ENCODE measurements at regions of chr4 and their contacts with region 1.

Region 1: GRCh38 chr4:77385124-77385969 is 220.3 kb upstream of the CXCL13 start:
- DNase-seq: peak; percentile 32
- H3K4me3 Mint-ChIP-seq: no peak overlapping the region
- H3K27ac Mint-ChIP-seq: no peak overlapping the region
- H3K4me1 Mint-ChIP-seq: peaks cover 6% of the 10 kb centered on the region
- H3K27me3 Mint-ChIP-seq: peaks cover 8% of the 10 kb centered on the region

Region 2: GRCh38 chr4:77372375-77372774 is 13.0 kb before region 1 on chr4:
- intact Hi-C with region 1: no loop called
- DNase-seq: no peak
- H3K4me3 Mint-ChIP-seq: no peak overlapping the region
- H3K27ac Mint-ChIP-seq: no peak overlapping the region
- H3K4me1 Mint-ChIP-seq: peaks cover 10% of the 10 kb centered on the region
- H3K27me3 Mint-ChIP-seq: peaks cover 7% of the 10 kb centered on the region

Region 3: GRCh38 chr4:77433418-77433733 is 48.0 kb after region 1 on chr4:
- intact Hi-C with region 1: loop called (anchors 1 kb)
- DNase-seq: peak; percentile 4
- H3K4me3 Mint-ChIP-seq: no peak overlapping the region
- H3K27ac Mint-ChIP-seq: no peak overlapping the region
- H3K4me1 Mint-ChIP-seq: peaks cover 8% of the 10 kb centered on the region
- H3K27me3 Mint-ChIP-seq: no peaks in the 10 kb centered on the region

Region 4: DNA sequence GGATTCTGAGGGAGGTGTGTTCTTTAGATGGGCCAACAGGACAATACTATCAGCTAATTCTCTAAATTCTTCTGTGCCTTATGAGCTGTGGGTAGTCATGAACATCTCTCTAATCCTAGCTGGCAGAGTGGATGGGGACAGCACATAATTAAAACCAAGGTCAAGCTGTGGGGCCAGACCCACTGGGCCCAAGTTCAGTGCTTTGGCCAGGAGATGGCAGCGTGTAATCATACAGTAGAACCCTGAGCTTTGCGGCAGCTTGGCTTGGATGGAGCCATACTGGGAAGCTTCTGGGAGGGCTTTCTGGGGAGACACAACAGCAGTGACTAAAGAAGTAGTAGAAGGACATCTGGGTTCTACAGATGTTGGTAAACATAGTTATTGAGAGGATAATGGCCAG is 79.9 kb after region 1 on chr4:
- intact Hi-C with region 1: loop called (anchors 1 kb)
- DNase-seq: no peak
- H3K4me3 Mint-ChIP-seq: no peak overlapping the region
- H3K27ac Mint-ChIP-seq: peak overlapping the region; percentile 5
- H3K4me1 Mint-ChIP-seq: peaks cover 7% of the 10 kb centered on the region
- H3K27me3 Mint-ChIP-seq: peaks cover 12% of the 10 kb centered on the region

Region 5: GRCh38 chr4:77600521-77601451 is 215.4 kb after region 1 on chr4:
- intact Hi-C with region 1: loop called (anchors 1 kb)
- DNase-seq: no peak
- H3K4me3 Mint-ChIP-seq: no peak overlapping the region
- H3K27ac Mint-ChIP-seq: no peak overlapping the region
- H3K4me1 Mint-ChIP-seq: peaks cover 33% of the 10 kb centered on the region
- H3K27me3 Mint-ChIP-seq: peaks cover 7% of the 10 kb centered on the region

Region 6: GRCh38 chr4:77697860-77698590 is 312.7 kb after region 1 on chr4:
- intact Hi-C with region 1: loop called (anchors 1 kb)
- DNase-seq: no peak
- H3K4me3 Mint-ChIP-seq: no peak overlapping the region
- H3K27ac Mint-ChIP-seq: no peak overlapping the region
- H3K4me1 Mint-ChIP-seq: no peaks in the 10 kb centered on the region
- H3K27me3 Mint-ChIP-seq: peaks cover 7% of the 10 kb centered on the region

Measured in activated T-helper 1 cell treated with anti-CD3 and anti-CD28 coated beads, Interleukin-12 subunit alpha, Interleukin-12 subunit beta, Interleukin-2, Interleukin-4 antibody, amounts not matched to agents 30 ng/mL and 10 ng/mL and 1 ng/mL, durations not matched to agents 14 hours and 24 hours and 36 hours (primary cell).